ENCODE measurements at regions of chr2 and their contacts with region 1.

Region 1: GRCh38 chr2:162318328-162319180 is at the start of gene IFIH1:
- DNase-seq: peak; percentile 71
- ATAC-seq: peak; percentile 81
- H3K4me3 Mint-ChIP-seq: peak within 1 kb of the TSS; percentile 99
- H3K27ac Mint-ChIP-seq: peak within 1 kb of the TSS; percentile 97
- H3K4me1 Mint-ChIP-seq: peaks cover 52% of the 10 kb centered on the region
- H3K27me3 Mint-ChIP-seq: no peaks in the 10 kb centered on the region
- total RNA-seq, gene IFIH1: 45.9 to 50.4 TPM

Region 2: DNA sequence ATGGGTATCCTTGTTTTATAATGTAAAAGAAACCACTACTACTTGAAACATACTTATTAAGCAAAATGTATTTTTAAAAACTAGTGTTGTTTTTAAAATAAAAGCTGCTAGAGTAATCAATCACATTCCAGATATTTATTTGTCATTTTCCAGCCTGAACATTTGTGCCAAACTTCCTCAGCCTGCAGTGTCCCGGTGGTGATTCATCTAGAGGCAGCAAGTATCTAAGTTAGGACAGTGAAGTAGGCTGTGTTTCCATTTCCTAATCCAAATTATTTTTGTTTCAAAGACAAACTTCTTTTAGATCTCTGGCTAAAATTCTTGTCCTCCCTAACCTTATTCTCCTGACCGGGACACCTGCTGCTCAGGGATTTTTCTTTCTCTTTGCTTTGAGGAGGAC is 153.8 kb before region 1 on chr2:
- POLR2A ChIA-PET with region 1: no interaction called
- DNase-seq: no peak
- ATAC-seq: no peak
- H3K4me3 Mint-ChIP-seq: no peak overlapping the region
- H3K27ac Mint-ChIP-seq: no peak overlapping the region
- H3K4me1 Mint-ChIP-seq: no peaks in the 10 kb centered on the region
- H3K27me3 Mint-ChIP-seq: peaks cover 30% of the 10 kb centered on the region

Region 3: GRCh38 chr2:162291748-162292147 is 26.8 kb before region 1 on chr2:
- POLR2A ChIA-PET with region 1: no interaction called
- DNase-seq: no peak
- ATAC-seq: no peak
- H3K4me3 Mint-ChIP-seq: no peak overlapping the region
- H3K27ac Mint-ChIP-seq: no peak overlapping the region
- H3K4me1 Mint-ChIP-seq: peaks cover 9% of the 10 kb centered on the region
- H3K27me3 Mint-ChIP-seq: no peaks in the 10 kb centered on the region

Region 4: GRCh38 chr2:162343824-162344616 is 25.5 kb after region 1 on chr2 and contains the start of gene GCA:
- POLR2A ChIA-PET with region 1: interaction called, 11 read pairs
- DNase-seq: peak; percentile 98
- ATAC-seq: peak; percentile 99
- H3K4me3 Mint-ChIP-seq: peak within 1 kb of the TSS; percentile 88
- H3K27ac Mint-ChIP-seq: peak within 1 kb of the TSS; percentile 75
- H3K4me1 Mint-ChIP-seq: peaks cover 10% of the 10 kb centered on the region
- H3K27me3 Mint-ChIP-seq: peaks cover 3% of the 10 kb centered on the region
- total RNA-seq, gene GCA: 14.7 to 20.9 TPM

Measured in activated naive CD8-positive, alpha-beta T cell treated with anti-CD3 and anti-CD28 coated beads, Interleukin-2, amount 10 ng/mL, durations not matched to agents 7 days and 5 days (primary cell).